ENCODE measurements at regions of chr11 and their contacts with region 1.

Region 1: DNA sequence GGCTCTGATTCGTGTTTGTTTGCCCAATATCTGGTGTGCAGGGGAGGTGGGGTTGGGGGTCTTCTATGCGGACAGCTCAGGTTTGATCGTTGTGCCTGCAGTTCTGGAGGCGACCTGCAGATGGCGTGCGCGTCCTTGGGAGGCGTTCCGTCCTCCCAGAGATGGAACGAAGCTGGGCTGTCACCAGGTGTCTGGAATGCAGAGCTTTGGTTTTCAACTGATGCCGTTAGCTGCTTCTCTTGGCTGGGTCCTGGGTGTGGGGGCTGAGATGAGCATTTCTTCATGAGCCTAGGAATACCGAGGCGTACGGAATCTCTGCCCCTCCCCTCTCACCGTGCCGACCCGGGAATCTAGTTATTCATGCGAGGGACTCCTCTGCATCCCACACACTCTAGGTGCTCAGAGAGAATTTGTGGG is 98.6 kb downstream of the CEP164 start:
- DNase-seq: peak in 1 of 2 donors; percentile 25
- ATAC-seq: peak in 1 of 2 donors; percentile 60
- H3K4me3 ChIP-seq: no peak overlapping the region
- H3K27ac ChIP-seq: no peak overlapping the region
- H3K4me1 ChIP-seq: no peaks in the 10 kb centered on the region
- H3K27me3 ChIP-seq: no peaks in the 10 kb centered on the region
- CTCF ChIP-seq: peak; percentile 47 to 90 (median 76)
- POLR2A ChIP-seq: no peak

Region 2: DNA sequence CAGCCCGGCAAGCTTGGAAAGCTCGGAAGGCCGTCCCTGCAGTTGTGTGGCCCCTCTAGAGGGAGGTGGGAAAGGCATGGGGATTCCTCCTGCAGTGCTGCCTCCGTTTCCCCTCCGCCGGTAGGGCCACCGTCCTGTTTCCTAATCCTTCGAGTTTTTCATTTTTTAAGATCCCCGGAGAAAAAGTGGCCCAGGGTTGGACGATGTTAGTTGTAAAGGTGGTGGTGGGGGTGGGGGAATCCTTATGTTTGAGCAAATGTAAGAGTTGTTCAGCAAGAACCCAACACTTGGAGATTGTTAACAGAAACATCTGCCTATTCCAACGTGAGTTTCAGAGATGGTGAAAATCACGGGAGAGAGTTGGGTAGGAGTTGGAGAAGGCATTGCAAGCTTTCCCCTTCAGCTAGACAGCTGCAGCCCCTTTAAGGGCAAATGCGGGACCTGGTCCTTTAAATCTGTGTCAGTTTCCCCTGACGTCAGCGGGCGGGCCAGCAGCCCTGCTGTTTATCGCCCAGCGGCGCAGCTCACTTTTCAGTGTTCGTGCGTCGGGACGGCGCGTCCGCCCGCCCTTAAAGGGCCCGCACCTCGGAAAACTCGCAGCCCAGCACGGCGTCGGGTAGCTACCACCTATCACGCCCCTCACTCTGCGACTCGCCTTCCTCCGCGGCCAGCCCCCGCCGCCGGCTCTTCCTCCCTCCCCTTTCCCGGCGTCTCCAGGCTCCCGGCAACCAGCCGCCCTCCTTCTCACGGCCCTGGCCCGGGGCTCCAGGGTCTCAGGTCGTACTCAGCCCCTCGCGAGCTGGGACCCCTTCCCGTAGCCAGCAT is 247.9 kb before region 1 on chr11 and contains the start of gene SIDT2:
- in situ Hi-C with region 1: no loop called
- intact Hi-C with region 1: no loop called
- DNase-seq: peak; percentile 91 to 93
- ATAC-seq: peak; percentile 81 to 90
- H3K4me3 ChIP-seq: peak within 1 kb of the TSS; percentile 62 to 98 (median 74)
- H3K27ac ChIP-seq: peak within 1 kb of the TSS; percentile 88 to 99 (median 89)
- H3K4me1 ChIP-seq: peaks cover 26 to 33% of the 10 kb centered on the region in 2 donors
- H3K27me3 ChIP-seq: no peaks in the 10 kb centered on the region
- CTCF ChIP-seq: peak in 1 of 5 experiments; percentile 26
- POLR2A ChIP-seq: peak; percentile 84 to 95
- total RNA-seq, gene SIDT2: 14.3 to 33.9 (median 17.7) TPM

Region 3: GRCh38 chr11:117384041-117384440 is 42.2 kb before region 1 on chr11:
- in situ Hi-C with region 1: no loop called
- intact Hi-C with region 1: no loop called
- DNase-seq: no peak
- ATAC-seq: no peak
- H3K4me3 ChIP-seq: no peak overlapping the region
- H3K27ac ChIP-seq: no peak overlapping the region
- H3K4me1 ChIP-seq: no peaks in the 10 kb centered on the region
- H3K27me3 ChIP-seq: no peaks in the 10 kb centered on the region
- CTCF ChIP-seq: no peak
- POLR2A ChIP-seq: no peak

Region 4: GRCh38 chr11:117807482-117808327 is 381.4 kb after region 1 on chr11:
- in situ Hi-C with region 1: loop called in 3 of 4 experiments (anchors 10 kb)
- intact Hi-C with region 1: no loop called
- DNase-seq: peak in 1 of 2 donors; percentile 57
- ATAC-seq: peak; percentile 68 to 74
- H3K4me3 ChIP-seq: no peak overlapping the region
- H3K27ac ChIP-seq: no peak overlapping the region
- H3K4me1 ChIP-seq: no peaks in the 10 kb centered on the region
- H3K27me3 ChIP-seq: peaks cover 0 to 11% (median 0%) of the 10 kb centered on the region in 3 donors
- CTCF ChIP-seq: peak; percentile 83 to 89 (median 87)
- POLR2A ChIP-seq: no peak

Region 5: DNA sequence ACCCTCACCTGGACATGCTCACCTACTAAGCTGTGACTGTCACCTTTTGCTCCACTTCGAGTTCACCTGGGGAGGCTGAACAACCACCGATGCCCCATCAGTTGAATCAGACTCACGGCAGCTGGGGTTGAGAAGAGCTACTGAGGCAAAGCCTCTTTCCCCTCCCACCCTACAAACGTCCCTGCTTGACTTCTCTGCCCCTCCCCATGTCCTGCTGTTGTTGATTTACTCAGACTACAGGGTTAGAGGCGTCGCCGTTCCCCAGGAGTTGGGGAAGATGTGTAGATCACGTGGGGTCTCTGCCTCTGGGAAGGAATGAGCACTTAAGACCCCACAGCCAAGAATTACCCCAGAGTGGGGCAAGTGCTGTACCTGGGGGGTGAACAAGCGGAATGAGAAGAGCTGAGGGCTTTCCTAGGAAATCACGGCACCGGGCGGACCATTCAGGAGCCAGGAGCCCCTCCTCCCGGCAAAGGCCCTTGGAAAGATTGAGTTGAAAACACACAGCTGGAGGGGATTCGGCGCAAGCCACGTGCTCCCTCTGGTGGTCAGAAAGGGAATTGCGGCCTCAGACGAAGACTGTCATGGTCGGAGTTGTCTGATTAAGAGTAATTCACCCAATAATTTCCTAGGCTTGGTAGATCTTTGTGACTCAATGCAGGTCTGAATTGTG is 391.2 kb after region 1 on chr11:
- in situ Hi-C with region 1: no loop called
- intact Hi-C with region 1: loop called (anchors 5 kb)
- DNase-seq: peak; percentile 31 to 62
- ATAC-seq: peak; percentile 64 to 70
- H3K4me3 ChIP-seq: no peak overlapping the region
- H3K27ac ChIP-seq: peak overlapping the region in 1 of 4 donors; percentile 18
- H3K4me1 ChIP-seq: peaks cover 0 to 3% of the 10 kb centered on the region in 2 donors
- H3K27me3 ChIP-seq: no peaks in the 10 kb centered on the region
- CTCF ChIP-seq: peak; percentile 84 to 97 (median 91)
- POLR2A ChIP-seq: no peak

Region 6: GRCh38 chr11:117946842-117947526 is 520.7 kb after region 1 on chr11:
- in situ Hi-C with region 1: loop called in 1 of 4 experiments (anchors 10 kb)
- intact Hi-C with region 1: loop called (anchors 10 kb)
- DNase-seq: peak; percentile 62 to 76
- ATAC-seq: peak; percentile 94 to 96
- H3K4me3 ChIP-seq: no peak overlapping the region
- H3K27ac ChIP-seq: no peak overlapping the region
- H3K4me1 ChIP-seq: peaks cover 0 to 2% of the 10 kb centered on the region in 2 donors
- H3K27me3 ChIP-seq: peaks cover 0 to 3% (median 0%) of the 10 kb centered on the region in 3 donors
- CTCF ChIP-seq: peak; percentile 88 to 97 (median 94)
- POLR2A ChIP-seq: no peak

Region 7: GRCh38 chr11:118051611-118052461 is 625.6 kb after region 1 on chr11:
- in situ Hi-C with region 1: loop called in 1 of 4 experiments (anchors 25 kb)
- intact Hi-C with region 1: no loop called
- DNase-seq: no peak
- ATAC-seq: no peak
- H3K4me3 ChIP-seq: no peak overlapping the region
- H3K27ac ChIP-seq: no peak overlapping the region
- H3K4me1 ChIP-seq: no peaks in the 10 kb centered on the region
- H3K27me3 ChIP-seq: no peaks in the 10 kb centered on the region
- CTCF ChIP-seq: no peak
- POLR2A ChIP-seq: no peak

Measured in gastrocnemius medialis (tissue), 4 donors.